Activated CD4-positive, alpha-beta memory T cell treated with anti-CD3 and anti-CD28 coated beads for 36 hours (primary cell): ENCODE measurements at regions of chr9 and their contacts with region 1.

Region 1: GRCh38 chr9:114653556-114654159 is 3.9 kb downstream of the TEX53 start:
- DNase-seq: peak; percentile 86
- H3K4me3 Mint-ChIP-seq: no peak overlapping the region
- H3K27ac Mint-ChIP-seq: no peak overlapping the region
- H3K4me1 Mint-ChIP-seq: peaks cover 21% of the 10 kb centered on the region
- H3K27me3 Mint-ChIP-seq: no peaks in the 10 kb centered on the region

Region 2: GRCh38 chr9:114096041-114096511 is 557.6 kb before region 1 on chr9:
- CTCF ChIA-PET with region 1: no interaction called
- POLR2A ChIA-PET with region 1: no interaction called
- intact Hi-C with region 1: no loop called
- DNase-seq: peak; percentile 16
- H3K4me3 Mint-ChIP-seq: no peak overlapping the region
- H3K27ac Mint-ChIP-seq: no peak overlapping the region
- H3K4me1 Mint-ChIP-seq: peaks cover 5% of the 10 kb centered on the region
- H3K27me3 Mint-ChIP-seq: peaks cover 36% of the 10 kb centered on the region

Region 3: GRCh38 chr9:114348906-114349482 is 304.7 kb before region 1 on chr9:
- CTCF ChIA-PET with region 1: interaction called, 6 read pairs
- POLR2A ChIA-PET with region 1: no interaction called
- intact Hi-C with region 1: loop called (anchors 1 kb)
- DNase-seq: peak; percentile 97
- H3K4me3 Mint-ChIP-seq: peak overlapping the region; percentile 40
- H3K27ac Mint-ChIP-seq: peak overlapping the region; percentile 100
- H3K4me1 Mint-ChIP-seq: peaks cover 46% of the 10 kb centered on the region
- H3K27me3 Mint-ChIP-seq: no peaks in the 10 kb centered on the region

Region 4: GRCh38 chr9:114434878-114435311 is 218.8 kb before region 1 on chr9:
- CTCF ChIA-PET with region 1: interaction called, 61 read pairs
- POLR2A ChIA-PET with region 1: no interaction called
- intact Hi-C with region 1: loop called (anchors 10 kb)
- DNase-seq: peak; percentile 17
- H3K4me3 Mint-ChIP-seq: no peak overlapping the region
- H3K27ac Mint-ChIP-seq: no peak overlapping the region
- H3K4me1 Mint-ChIP-seq: peaks cover 3% of the 10 kb centered on the region
- H3K27me3 Mint-ChIP-seq: no peaks in the 10 kb centered on the region

Region 5: DNA sequence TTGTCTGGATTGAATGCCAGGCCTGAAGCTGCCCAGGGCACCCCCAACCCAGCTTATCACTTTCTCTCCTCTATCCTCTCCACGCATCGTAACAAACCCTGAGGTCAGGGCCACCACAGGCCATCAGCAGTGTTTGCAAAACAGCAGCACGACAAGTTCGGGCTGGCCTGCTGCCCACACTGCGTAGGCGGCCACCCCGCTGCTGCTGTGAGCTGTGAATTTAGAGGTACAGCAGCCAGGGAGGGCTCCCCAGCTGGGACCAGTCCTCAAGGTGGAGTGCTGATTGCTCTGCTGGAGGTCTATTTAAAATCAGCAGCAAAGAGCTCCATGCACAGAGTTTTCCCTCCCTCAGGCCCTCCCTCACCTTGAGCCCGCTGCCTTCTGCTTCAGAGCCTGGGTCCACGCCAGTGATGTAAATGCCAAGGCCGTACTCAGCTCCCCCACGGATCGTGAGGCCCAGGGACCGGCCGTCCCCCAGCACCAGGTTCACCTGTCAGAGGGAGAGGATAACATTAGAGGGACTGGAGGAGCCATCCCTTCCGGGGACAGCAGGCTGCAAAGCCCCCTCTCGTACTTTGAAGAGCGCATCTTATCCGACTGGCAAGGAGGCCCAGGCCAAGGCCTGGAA is 187.6 kb before region 1 on chr9:
- CTCF ChIA-PET with region 1: no interaction called
- POLR2A ChIA-PET with region 1: no interaction called
- intact Hi-C with region 1: no loop called
- DNase-seq: no peak
- H3K4me3 Mint-ChIP-seq: no peak overlapping the region
- H3K27ac Mint-ChIP-seq: no peak overlapping the region
- H3K4me1 Mint-ChIP-seq: no peaks in the 10 kb centered on the region
- H3K27me3 Mint-ChIP-seq: no peaks in the 10 kb centered on the region

Region 6: DNA sequence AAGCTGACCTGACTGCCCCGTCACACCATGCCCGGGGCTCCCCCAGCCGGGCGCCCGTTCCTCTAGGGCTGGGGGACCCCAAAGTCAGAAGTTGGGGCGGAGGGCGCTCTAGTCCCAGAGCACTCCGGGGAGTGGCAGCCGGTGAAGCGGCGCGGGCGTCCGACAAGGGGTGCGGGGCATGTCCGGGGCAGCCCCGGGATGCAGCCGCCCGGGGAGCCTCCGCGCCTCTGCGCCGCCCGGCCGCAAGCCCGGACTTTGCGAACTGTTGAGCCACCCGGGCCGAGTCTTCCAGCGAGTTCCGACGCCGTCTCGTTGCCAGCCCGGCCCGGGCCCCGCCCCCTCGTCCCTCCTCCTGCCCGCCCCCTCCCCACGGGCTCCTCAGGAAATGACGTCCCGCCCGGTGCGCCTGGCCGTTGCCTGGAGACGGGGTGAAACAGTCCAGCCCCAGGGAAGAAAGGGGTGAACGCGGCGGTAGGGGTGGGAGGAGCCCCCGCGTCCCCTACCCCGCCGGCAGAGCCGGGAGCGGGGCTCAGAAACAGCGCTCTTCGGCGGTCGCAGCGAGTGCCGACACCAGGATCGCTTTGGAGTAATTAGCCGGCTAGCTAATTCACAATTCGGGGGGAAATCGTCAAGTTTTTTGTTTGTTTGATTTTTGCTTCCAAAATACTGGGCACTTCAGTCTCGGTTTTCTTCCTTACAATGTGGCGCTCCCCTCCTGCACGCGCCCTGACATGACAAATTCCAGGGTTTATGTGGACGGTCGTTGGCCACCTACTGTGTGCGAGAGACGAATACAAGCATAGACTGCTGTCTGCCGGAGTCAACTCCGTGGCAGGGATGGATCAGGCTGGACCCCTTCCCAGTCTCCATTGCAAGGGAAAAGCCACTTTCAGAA is 148.2 kb before region 1 on chr9 and contains the start of gene WHRN:
- CTCF ChIA-PET with region 1: interaction called, 24 read pairs
- POLR2A ChIA-PET with region 1: no interaction called
- intact Hi-C with region 1: loop called (anchors 5 kb)
- DNase-seq: peak; percentile 93
- H3K4me3 Mint-ChIP-seq: peak within 1 kb of the TSS; percentile 76
- H3K27ac Mint-ChIP-seq: peak within 1 kb of the TSS; percentile 42
- H3K4me1 Mint-ChIP-seq: peaks cover 24% of the 10 kb centered on the region
- H3K27me3 Mint-ChIP-seq: peaks cover 17% of the 10 kb centered on the region
- total RNA-seq, gene WHRN: 2.8 to 4.4 TPM

Region 7: GRCh38 chr9:114587385-114588202 is 66.1 kb before region 1 on chr9 and contains the start of gene ATP6V1G1:
- CTCF ChIA-PET with region 1: interaction called, 80 read pairs
- POLR2A ChIA-PET with region 1: interaction called, 9 read pairs
- intact Hi-C with region 1: loop called (anchors 1 kb)
- DNase-seq: peak; percentile 100
- H3K4me3 Mint-ChIP-seq: peak within 1 kb of the TSS; percentile 99
- H3K27ac Mint-ChIP-seq: peak within 1 kb of the TSS; percentile 97
- H3K4me1 Mint-ChIP-seq: peaks cover 40% of the 10 kb centered on the region
- H3K27me3 Mint-ChIP-seq: no peaks in the 10 kb centered on the region
- total RNA-seq, gene ATP6V1G1: 32.1 to 38.9 TPM

Region 8: DNA sequence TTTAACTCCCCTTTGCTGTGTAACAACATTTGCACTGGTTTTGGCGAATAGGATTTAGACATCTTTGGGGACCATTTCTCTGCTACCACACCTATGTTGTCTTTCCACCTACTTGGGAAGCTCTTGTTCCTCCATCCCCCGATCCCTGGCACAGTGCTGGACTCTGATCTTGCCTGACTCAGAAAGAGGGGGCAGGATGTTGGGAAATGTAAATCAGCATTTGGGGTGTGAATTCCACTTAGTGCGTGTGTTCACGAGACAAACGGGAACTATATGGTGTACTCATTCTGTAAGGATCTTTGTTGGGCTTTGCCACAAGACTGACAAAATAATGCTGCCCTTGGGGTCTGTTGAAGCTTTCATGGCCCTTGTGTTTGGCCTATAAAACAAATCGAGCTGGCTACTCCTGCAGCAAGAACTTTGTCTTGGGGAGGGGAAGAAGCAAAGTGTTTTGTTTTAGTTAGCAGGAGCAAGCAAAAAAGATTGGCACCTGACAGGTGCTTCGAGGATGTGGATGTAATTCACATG is 24.0 kb before region 1 on chr9:
- CTCF ChIA-PET with region 1: interaction called, 12 read pairs
- POLR2A ChIA-PET with region 1: no interaction called
- intact Hi-C with region 1: no loop called
- DNase-seq: no peak
- H3K4me3 Mint-ChIP-seq: no peak overlapping the region
- H3K27ac Mint-ChIP-seq: no peak overlapping the region
- H3K4me1 Mint-ChIP-seq: no peaks in the 10 kb centered on the region
- H3K27me3 Mint-ChIP-seq: no peaks in the 10 kb centered on the region